Caco-2 (cell line): ENCODE measurements at regions of chr1 and their contacts with region 1.

Region 1: GRCh38 chr1:225763716-225764548 is 13.7 kb upstream of the SRP9 start:
- DNase-seq: no peak
- H3K4me3 ChIP-seq: no peak overlapping the region
- H3K4me3 Mint-ChIP-seq: no peak overlapping the region
- H3K27ac Mint-ChIP-seq: no peak overlapping the region
- H3K4me1 ChIP-seq: peaks cover 52% of the 10 kb centered on the region
- H3K4me1 Mint-ChIP-seq: peaks cover 42% of the 10 kb centered on the region
- H3K27me3 ChIP-seq: no peaks in the 10 kb centered on the region
- H3K27me3 Mint-ChIP-seq: no peaks in the 10 kb centered on the region
- CTCF ChIP-seq: no peak

Region 2: GRCh38 chr1:225700164-225700740 is 63.7 kb before region 1 on chr1:
- CTCF ChIA-PET with region 1: no interaction called
- POLR2A ChIA-PET with region 1: no interaction called
- intact Hi-C with region 1: loop called (anchors 5 kb)
- DNase-seq: peak; percentile 40 to 45
- H3K4me3 ChIP-seq: no peak overlapping the region
- H3K4me3 Mint-ChIP-seq: no peak overlapping the region
- H3K27ac Mint-ChIP-seq: peak overlapping the region; percentile 23
- H3K4me1 ChIP-seq: peaks cover 12% of the 10 kb centered on the region; the same call in 1 of the 2 replicates
- H3K4me1 Mint-ChIP-seq: peaks cover 12% of the 10 kb centered on the region
- H3K27me3 ChIP-seq: no peaks in the 10 kb centered on the region
- H3K27me3 Mint-ChIP-seq: no peaks in the 10 kb centered on the region
- CTCF ChIP-seq: no peak

Region 3: GRCh38 chr1:225746361-225747179 is 17.4 kb before region 1 on chr1:
- CTCF ChIA-PET with region 1: no interaction called
- POLR2A ChIA-PET with region 1: interaction called, 11 read pairs
- intact Hi-C with region 1: no loop called
- DNase-seq: peak; percentile 59 to 63
- H3K4me3 ChIP-seq: peak overlapping the region; percentile 19; the same call in 1 of the 2 replicates
- H3K4me3 Mint-ChIP-seq: peak overlapping the region; percentile 5
- H3K27ac Mint-ChIP-seq: peak overlapping the region; percentile 69
- H3K4me1 ChIP-seq: peaks cover 13% of the 10 kb centered on the region
- H3K4me1 Mint-ChIP-seq: no peaks in the 10 kb centered on the region
- H3K27me3 ChIP-seq: no peaks in the 10 kb centered on the region
- H3K27me3 Mint-ChIP-seq: no peaks in the 10 kb centered on the region
- CTCF ChIP-seq: no peak